ENCODE measurements at regions of chr6 and their contacts with region 1.

Region 1: GRCh38 chr6:1604158-1605030 is 5.3 kb upstream of the FOXC1 start:
- DNase-seq: peak; percentile 32 to 84 (median 56)
- ATAC-seq: peak; percentile 77
- H3K4me3 ChIP-seq: no peak overlapping the region
- H3K4me3 Mint-ChIP-seq: no peak overlapping the region
- H3K27ac ChIP-seq: no peak overlapping the region
- H3K27ac Mint-ChIP-seq: no peak overlapping the region
- H3K4me1 ChIP-seq: peaks cover 54% of the 10 kb centered on the region
- H3K4me1 Mint-ChIP-seq: peaks cover 37% of the 10 kb centered on the region
- H3K27me3 ChIP-seq: peaks cover 69 to 94% of the 10 kb centered on the region in 2 experiments
- H3K27me3 Mint-ChIP-seq: peaks cover 87% of the 10 kb centered on the region
- CTCF ChIP-seq: peak; percentile 94

Region 2: DNA sequence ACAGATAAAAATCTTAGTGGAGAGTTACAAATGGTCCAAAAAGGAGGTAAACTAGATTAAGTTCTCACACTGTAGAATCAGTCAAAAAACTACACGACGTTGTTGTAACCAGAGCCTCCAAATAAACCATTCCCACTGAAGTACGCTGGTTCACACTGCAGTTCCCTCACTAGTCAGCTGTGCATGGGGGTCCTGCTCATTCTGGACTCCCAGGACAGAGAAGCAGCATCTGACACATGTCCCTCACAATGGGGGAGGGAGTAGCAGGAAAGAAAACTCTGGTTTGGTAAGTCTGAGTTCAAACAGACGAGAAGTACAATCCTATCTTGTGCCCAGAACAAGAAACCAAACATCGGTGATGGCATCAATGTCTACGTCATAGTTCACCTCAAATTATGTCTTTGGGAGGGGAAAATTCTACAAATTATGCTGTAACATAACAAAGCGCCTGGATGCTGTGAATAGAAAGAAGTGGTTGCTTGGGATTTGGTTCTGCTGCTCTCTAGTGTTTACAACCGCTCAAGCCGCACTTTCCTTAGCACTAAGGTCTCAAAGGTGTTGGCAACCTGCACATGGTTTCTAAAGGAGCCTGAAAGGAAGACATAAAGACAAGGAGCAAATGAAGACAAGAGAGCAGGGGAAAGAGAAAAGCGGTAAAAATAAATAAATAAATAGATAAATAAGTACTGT is 433.0 kb after region 1 on chr6:
- CTCF ChIA-PET with region 1: no interaction called
- POLR2A ChIA-PET with region 1: no interaction called
- intact Hi-C with region 1: loop called in 1 of 2 experiments (anchors 5 kb)
- DNase-seq: peak in 1 of 14 experiments; percentile 10
- ATAC-seq: peak; percentile 60
- H3K4me3 ChIP-seq: no peak overlapping the region
- H3K4me3 Mint-ChIP-seq: peak overlapping the region; percentile 51
- H3K27ac ChIP-seq: no peak overlapping the region
- H3K27ac Mint-ChIP-seq: no peak overlapping the region
- H3K4me1 ChIP-seq: peaks cover 20% of the 10 kb centered on the region
- H3K4me1 Mint-ChIP-seq: peaks cover 46% of the 10 kb centered on the region
- H3K27me3 ChIP-seq: no peaks in the 10 kb centered on the region
- H3K27me3 Mint-ChIP-seq: no peaks in the 10 kb centered on the region
- CTCF ChIP-seq: no peak

Region 3: GRCh38 chr6:2103644-2104523 is 499.5 kb after region 1 on chr6:
- CTCF ChIA-PET with region 1: no interaction called
- POLR2A ChIA-PET with region 1: interaction called, 3 read pairs
- intact Hi-C with region 1: loop called (anchors 1 kb)
- DNase-seq: peak in 3 of 14 experiments; percentile 44 to 50 (median 45)
- ATAC-seq: peak; percentile 58
- H3K4me3 ChIP-seq: no peak overlapping the region
- H3K4me3 Mint-ChIP-seq: no peak overlapping the region
- H3K27ac ChIP-seq: no peak overlapping the region
- H3K27ac Mint-ChIP-seq: no peak overlapping the region
- H3K4me1 ChIP-seq: no peaks in the 10 kb centered on the region
- H3K4me1 Mint-ChIP-seq: no peaks in the 10 kb centered on the region
- H3K27me3 ChIP-seq: no peaks in the 10 kb centered on the region
- H3K27me3 Mint-ChIP-seq: no peaks in the 10 kb centered on the region
- CTCF ChIP-seq: peak; percentile 63

Region 4: GRCh38 chr6:2196079-2196679 is 591.8 kb after region 1 on chr6:
- CTCF ChIA-PET with region 1: interaction called, 3 read pairs
- POLR2A ChIA-PET with region 1: no interaction called
- intact Hi-C with region 1: loop called (anchors 1 to 2 kb)
- DNase-seq: peak in 7 of 14 experiments; percentile 7 to 69 (median 47)
- ATAC-seq: peak; percentile 58
- H3K4me3 ChIP-seq: no peak overlapping the region
- H3K4me3 Mint-ChIP-seq: no peak overlapping the region
- H3K27ac ChIP-seq: no peak overlapping the region
- H3K27ac Mint-ChIP-seq: no peak overlapping the region
- H3K4me1 ChIP-seq: no peaks in the 10 kb centered on the region
- H3K4me1 Mint-ChIP-seq: peaks cover 4% of the 10 kb centered on the region
- H3K27me3 ChIP-seq: no peaks in the 10 kb centered on the region
- H3K27me3 Mint-ChIP-seq: no peaks in the 10 kb centered on the region
- CTCF ChIP-seq: peak; percentile 82

Region 5: DNA sequence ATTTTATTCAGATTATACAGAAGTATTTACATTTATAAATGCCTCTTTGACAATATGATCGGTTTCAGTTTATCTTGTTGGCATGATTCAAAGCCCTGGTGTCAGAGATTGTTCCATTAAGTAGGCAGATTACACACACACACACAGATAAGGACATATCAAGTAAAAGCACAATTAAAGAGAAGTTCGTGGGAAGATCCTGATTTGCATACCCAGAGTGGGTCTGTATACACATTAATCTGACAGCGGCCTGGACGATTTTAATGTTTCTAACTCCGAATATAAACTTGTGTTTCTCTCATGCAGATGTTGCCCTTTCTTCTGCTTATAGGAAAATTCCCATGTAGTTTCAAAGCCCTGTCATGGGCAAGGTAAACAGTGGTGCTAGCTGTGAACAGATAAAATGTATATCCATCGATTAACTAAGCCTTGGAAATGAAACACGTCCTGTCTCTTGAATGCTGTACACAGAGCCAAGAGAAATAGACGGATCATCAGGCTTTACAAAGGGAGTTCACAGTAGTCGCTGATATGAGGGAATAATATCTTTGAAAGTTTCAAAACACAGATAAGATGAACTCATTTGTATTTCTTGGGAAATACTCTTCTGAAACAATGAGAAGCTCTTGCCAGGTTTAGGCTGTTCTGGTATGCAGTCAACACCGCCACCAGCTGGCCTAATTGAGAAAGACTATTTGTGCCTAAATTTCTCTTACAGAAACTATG is 749.2 kb after region 1 on chr6:
- CTCF ChIA-PET with region 1: interaction called, 3 read pairs
- POLR2A ChIA-PET with region 1: no interaction called
- intact Hi-C with region 1: loop called (anchors 1 kb)
- DNase-seq: peak; percentile 14 to 61 (median 28)
- ATAC-seq: no peak
- H3K4me3 ChIP-seq: no peak overlapping the region
- H3K4me3 Mint-ChIP-seq: no peak overlapping the region
- H3K27ac ChIP-seq: no peak overlapping the region
- H3K27ac Mint-ChIP-seq: no peak overlapping the region
- H3K4me1 ChIP-seq: no peaks in the 10 kb centered on the region
- H3K4me1 Mint-ChIP-seq: no peaks in the 10 kb centered on the region
- H3K27me3 ChIP-seq: no peaks in the 10 kb centered on the region
- H3K27me3 Mint-ChIP-seq: no peaks in the 10 kb centered on the region
- CTCF ChIP-seq: peak; percentile 71

Region 6: DNA sequence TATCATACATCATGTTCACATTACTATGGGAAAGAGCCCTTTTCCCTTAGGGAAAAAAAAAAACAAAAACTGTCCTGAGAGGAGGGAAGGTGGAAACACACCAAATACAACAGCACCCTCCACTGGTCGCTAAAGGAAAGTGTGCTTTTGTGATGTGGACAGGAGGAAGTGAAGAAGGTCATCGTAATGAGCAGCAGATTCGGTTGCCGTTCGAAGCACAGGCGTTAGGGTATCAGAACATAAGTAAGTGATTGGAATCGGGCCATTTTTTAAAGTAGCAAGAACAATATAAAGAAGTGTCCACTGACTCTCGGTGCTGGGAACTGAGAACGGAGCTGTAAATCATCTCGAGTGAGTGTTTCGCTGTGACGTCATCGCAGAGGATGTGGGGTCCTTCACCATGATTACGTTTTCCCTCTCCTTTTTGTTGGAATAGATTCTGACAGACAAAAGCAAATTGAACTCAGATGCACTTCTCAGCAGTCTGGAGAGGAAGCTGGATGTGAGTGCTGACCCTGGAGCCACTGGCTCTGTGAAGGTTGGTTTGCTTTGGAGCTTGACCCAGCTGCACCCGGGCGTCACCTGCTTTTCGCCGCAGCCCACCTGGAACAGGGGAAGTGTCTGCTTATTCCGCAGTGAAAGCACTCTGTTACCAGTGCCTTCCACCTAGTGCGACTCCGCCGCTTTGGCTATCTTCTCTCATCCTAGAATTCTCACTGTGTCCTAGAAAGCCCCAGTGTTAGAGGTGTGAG is 844.6 kb after region 1 on chr6:
- CTCF ChIA-PET with region 1: no interaction called
- POLR2A ChIA-PET with region 1: no interaction called
- intact Hi-C with region 1: loop called (anchors 5 to 10 kb)
- DNase-seq: peak in 3 of 14 experiments; percentile 12 to 47 (median 42)
- ATAC-seq: no peak
- H3K4me3 ChIP-seq: no peak overlapping the region
- H3K4me3 Mint-ChIP-seq: peak overlapping the region; percentile 21
- H3K27ac ChIP-seq: no peak overlapping the region
- H3K27ac Mint-ChIP-seq: no peak overlapping the region
- H3K4me1 ChIP-seq: peaks cover 4% of the 10 kb centered on the region
- H3K4me1 Mint-ChIP-seq: no peaks in the 10 kb centered on the region
- H3K27me3 ChIP-seq: no peaks in the 10 kb centered on the region
- H3K27me3 Mint-ChIP-seq: no peaks in the 10 kb centered on the region
- CTCF ChIP-seq: no peak

Region 7: DNA sequence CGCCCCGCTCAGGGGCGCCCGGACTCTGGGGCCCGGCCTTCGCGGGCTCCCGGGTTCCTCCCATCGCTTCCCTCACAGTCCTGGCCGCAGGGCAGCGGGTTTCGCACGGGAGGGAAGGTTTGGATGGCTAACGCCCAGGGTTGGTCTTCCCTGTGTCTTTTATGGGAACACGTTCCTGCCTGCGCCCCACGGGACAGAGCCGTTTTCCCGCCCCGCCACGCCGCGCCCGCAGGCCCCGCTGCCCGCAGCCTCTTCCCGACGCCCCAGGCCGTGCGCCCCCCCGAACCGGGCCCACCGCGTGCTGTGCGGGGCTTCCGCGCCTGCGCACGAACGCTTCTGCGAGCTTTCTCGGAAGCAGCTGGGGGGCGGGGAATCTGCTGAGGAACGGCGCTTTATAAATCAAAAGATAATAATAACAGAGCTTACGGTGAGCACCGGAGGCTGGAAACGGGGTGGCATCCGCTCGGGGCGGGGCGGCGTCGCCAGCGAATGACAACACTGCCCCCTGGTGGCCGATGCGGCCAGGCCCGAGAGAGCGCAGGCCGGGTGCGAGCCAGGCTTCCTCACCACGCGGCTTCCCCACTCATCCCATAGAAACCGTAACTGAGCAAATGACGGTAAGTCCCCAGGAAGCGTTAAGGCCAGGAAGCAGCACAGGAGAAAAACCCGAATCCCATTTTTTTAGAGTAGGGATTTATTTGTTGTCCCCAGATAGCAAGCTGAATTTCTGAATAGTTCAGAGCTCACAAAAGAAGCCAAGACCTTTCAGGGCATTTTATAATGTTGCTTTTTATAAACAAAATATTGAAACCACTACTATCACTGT is 1030.0 kb after region 1 on chr6:
- CTCF ChIA-PET with region 1: interaction called, 4 read pairs
- POLR2A ChIA-PET with region 1: interaction called, 4 read pairs
- intact Hi-C with region 1: loop called (anchors 2 kb)
- DNase-seq: peak; percentile 68 to 90 (median 80)
- ATAC-seq: peak; percentile 94
- H3K4me3 ChIP-seq: peak overlapping the region; percentile 44
- H3K4me3 Mint-ChIP-seq: peak overlapping the region; percentile 84
- H3K27ac ChIP-seq: no peak overlapping the region
- H3K27ac Mint-ChIP-seq: no peak overlapping the region
- H3K4me1 ChIP-seq: peaks cover 9% of the 10 kb centered on the region
- H3K4me1 Mint-ChIP-seq: no peaks in the 10 kb centered on the region
- H3K27me3 ChIP-seq: peaks cover 0 to 5% of the 10 kb centered on the region in 2 experiments
- H3K27me3 Mint-ChIP-seq: peaks cover 22% of the 10 kb centered on the region
- CTCF ChIP-seq: peak; percentile 97